ENCODE measurements at regions of chr19 and their contacts with region 1.

Region 1: DNA sequence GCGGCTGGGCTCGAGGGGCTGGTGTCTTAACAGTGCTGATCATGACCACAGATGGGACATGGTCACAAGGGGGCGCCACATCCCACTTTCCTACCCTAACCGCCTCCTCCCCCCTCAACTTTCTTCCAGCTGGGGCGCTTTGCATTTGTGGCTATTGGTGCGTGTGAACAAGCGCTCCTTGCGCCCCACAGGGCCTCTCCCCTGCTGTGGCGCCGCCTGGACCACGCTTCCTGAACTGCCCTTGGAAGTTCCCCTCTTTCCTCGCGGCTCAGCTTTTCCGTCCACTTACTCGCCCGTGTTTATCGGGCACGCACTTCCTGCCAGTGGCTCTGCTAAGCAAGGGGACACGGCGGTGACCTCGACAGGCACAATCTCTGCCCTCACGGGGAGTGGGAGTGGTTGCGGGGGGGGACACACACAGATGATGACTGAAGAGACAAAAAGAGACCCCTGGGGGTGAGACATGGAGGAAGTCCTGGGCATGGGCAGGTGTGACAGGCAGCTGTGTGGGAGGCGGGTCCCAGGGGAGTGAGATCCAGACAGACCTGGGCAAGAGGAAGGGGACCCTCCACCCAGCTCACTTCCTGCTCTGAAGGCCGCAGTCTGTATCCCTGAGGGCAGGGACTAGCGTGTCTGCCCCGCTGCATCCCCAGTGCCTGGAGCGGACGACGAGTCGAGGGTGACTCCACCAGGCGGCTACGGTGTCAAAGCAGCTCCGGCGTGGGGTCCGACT is 40.3 kb downstream of the ZNF787 start:
- DNase-seq: peak; percentile 88
- H3K4me3 Mint-ChIP-seq: peak overlapping the region; percentile 53
- H3K27ac Mint-ChIP-seq: peak overlapping the region; percentile 25
- H3K4me1 Mint-ChIP-seq: peaks cover 9% of the 10 kb centered on the region
- H3K27me3 Mint-ChIP-seq: no peaks in the 10 kb centered on the region
- CTCF ChIP-seq: peak; percentile 56

Region 2: GRCh38 chr19:55986487-55986886 is 94.3 kb before region 1 on chr19 and contains the start of gene NLRP5:
- CTCF ChIA-PET with region 1: no interaction called
- intact Hi-C with region 1: no loop called
- DNase-seq: no peak
- H3K4me3 Mint-ChIP-seq: no peak within 1 kb of the TSS
- H3K27ac Mint-ChIP-seq: no peak within 1 kb of the TSS
- H3K4me1 Mint-ChIP-seq: no peaks in the 10 kb centered on the region
- H3K27me3 Mint-ChIP-seq: no peaks in the 10 kb centered on the region
- CTCF ChIP-seq: no peak
- total RNA-seq, gene NLRP5: not detected in 2 replicates

Region 3: GRCh38 chr19:56066152-56067023 is 14.4 kb before region 1 on chr19:
- CTCF ChIA-PET with region 1: interaction called, 11 read pairs
- intact Hi-C with region 1: no loop called
- DNase-seq: peak; percentile 81
- H3K4me3 Mint-ChIP-seq: peak overlapping the region; percentile 56
- H3K27ac Mint-ChIP-seq: no peak overlapping the region
- H3K4me1 Mint-ChIP-seq: peaks cover 10% of the 10 kb centered on the region
- H3K27me3 Mint-ChIP-seq: peaks cover 20% of the 10 kb centered on the region
- CTCF ChIP-seq: peak; percentile 97

Region 4: DNA sequence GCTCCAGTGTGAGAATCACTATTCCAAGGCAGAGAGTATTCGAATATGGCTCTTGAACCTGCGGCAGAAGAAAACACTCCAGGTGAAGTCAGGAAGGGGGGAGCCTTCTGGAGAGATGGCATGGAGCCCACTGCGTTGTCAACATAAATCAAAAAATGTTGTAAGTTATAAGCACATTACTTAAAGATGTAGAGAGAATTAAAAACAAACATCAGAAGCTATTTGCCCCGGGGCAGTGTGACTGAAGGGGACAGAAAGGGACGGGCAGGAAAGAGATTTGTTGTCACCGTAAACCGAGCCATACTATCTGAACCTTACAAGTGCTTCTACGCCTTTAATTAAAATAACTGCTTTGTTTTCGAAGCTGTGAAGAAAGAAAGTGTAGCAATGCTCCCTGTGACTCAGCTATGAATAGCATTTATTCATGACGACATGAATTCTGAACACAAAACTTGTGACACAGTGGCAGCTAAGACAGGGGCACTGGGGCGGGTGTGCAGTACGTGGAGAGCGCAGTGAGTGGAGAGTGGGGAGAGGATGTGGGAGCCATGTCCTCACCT is 10.2 kb after region 1 on chr19:
- CTCF ChIA-PET with region 1: interaction called, 23 read pairs
- intact Hi-C with region 1: no loop called
- DNase-seq: peak; percentile 40
- H3K4me3 Mint-ChIP-seq: peak overlapping the region; percentile 66
- H3K27ac Mint-ChIP-seq: peak overlapping the region; percentile 91
- H3K4me1 Mint-ChIP-seq: peaks cover 28% of the 10 kb centered on the region
- H3K27me3 Mint-ChIP-seq: no peaks in the 10 kb centered on the region
- CTCF ChIP-seq: no peak

Region 5: GRCh38 chr19:56170261-56170660 is 89.4 kb after region 1 on chr19:
- CTCF ChIA-PET with region 1: interaction called, 13 read pairs
- intact Hi-C with region 1: loop called (anchors 1 kb)
- DNase-seq: peak; percentile 65
- H3K4me3 Mint-ChIP-seq: peak overlapping the region; percentile 27
- H3K27ac Mint-ChIP-seq: no peak overlapping the region
- H3K4me1 Mint-ChIP-seq: peaks cover 11% of the 10 kb centered on the region
- H3K27me3 Mint-ChIP-seq: peaks cover 25% of the 10 kb centered on the region
- CTCF ChIP-seq: no peak

Region 6: DNA sequence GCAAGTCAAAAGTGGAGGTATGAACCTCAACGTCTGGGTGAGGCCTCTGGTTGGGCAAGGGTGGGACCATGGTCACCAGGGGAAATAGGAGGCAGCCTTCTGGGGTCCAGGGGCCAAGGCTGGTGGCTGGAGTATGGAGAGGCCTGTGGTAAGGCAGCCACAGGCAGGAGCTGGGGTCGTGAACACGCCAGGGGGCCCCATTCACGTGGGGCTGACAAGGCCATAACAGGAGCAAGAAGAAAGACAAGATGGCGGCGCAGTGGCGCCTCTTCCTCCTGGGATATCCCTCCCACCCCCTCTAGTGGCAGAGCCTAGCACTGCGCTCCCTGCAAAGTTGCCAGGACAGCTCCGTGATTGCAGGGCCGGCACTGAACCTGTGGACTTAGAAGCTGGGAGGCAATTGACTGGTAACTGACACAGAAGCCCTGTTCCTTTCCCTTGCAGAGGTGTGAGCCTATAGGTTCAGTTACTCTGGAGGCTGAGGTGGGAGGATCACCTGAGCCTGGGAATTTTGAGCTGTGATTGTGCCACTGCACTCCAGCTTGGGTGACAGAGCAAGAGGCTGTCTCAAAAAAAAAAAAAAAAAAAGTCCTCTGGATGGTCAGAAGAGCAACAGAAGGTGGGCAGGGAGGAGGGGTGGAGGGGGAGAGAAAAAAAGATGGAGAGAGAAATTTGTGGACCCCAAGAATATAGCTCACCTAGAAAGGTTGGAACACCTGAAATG is 172.0 kb after region 1 on chr19:
- CTCF ChIA-PET with region 1: interaction called, 15 read pairs
- intact Hi-C with region 1: loop called (anchors 2 kb)
- DNase-seq: peak; percentile 91
- H3K4me3 Mint-ChIP-seq: no peak overlapping the region
- H3K27ac Mint-ChIP-seq: peak overlapping the region; percentile 39
- H3K4me1 Mint-ChIP-seq: no peaks in the 10 kb centered on the region
- H3K27me3 Mint-ChIP-seq: no peaks in the 10 kb centered on the region
- CTCF ChIP-seq: peak; percentile 88

Region 7: GRCh38 chr19:56333505-56333904 is 252.7 kb after region 1 on chr19:
- CTCF ChIA-PET with region 1: interaction called, 19 read pairs
- intact Hi-C with region 1: loop called (anchors 1 kb)
- DNase-seq: peak; percentile 69
- H3K4me3 Mint-ChIP-seq: no peak overlapping the region
- H3K27ac Mint-ChIP-seq: no peak overlapping the region
- H3K4me1 Mint-ChIP-seq: no peaks in the 10 kb centered on the region
- H3K27me3 Mint-ChIP-seq: peaks cover 12% of the 10 kb centered on the region
- CTCF ChIP-seq: peak; percentile 78